ENCODE measurements at regions of chr1 and their contacts with region 1.

Region 1: DNA sequence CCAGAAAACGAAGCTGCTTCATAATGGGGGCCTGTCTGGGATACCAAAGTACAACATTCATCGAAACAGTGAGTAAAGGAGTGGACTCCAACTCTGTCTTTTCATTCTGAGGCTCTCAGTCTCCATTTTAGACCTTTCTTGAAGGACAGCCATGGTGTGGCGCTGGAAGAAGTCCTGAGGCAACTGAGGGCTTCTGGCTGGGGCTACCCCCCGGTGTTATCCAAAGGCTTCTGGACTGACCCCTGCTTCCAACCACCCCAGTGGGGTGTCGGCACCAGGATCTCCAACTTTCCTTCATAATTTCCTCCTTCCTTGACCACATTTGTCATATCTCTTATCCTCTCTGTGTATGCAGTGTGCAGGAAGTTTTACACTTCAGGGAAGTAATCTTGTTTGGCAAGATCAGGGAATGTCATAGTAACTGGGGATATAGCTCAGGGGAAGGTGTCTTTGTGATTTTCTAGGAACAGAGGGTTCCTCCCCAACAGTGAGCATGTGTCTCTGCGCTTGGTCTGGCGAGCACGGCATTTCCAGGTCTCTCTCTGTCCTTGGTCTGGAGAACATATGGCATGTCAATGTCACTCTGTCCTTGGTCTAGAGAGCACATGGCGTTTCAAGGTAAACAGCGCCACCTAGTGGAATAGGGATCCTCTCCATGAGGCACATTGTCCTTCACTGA is 19.4 kb upstream of the BSDC1 start:
- DNase-seq: peak; percentile 46
- H3K4me3 ChIP-seq: no peak overlapping the region
- H3K27ac ChIP-seq: no peak overlapping the region
- H3K4me1 ChIP-seq: no peaks in the 10 kb centered on the region
- H3K27me3 ChIP-seq: no peaks in the 10 kb centered on the region
- CTCF ChIP-seq: peak; percentile 67 to 78

Region 2: DNA sequence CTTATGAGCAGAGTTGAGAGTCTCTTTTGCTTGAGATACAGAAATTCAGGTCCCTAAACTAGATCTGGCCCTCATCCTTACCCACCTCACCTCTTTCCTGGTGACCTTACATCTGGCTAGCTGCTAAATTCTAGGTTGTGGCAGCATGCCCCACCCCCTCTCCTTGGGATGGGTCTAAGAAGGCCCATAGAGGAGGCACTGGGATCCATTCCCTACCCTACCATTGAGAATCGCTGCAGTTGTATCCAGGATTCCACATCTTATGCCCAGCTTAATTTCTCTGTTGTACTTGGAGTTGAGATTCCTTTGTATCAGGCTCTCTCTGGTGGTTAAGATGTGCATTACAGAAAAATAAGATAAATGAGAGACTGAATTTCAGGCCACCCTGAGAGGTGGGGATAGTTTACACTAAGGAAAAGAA is 350.4 kb before region 1 on chr1:
- CTCF ChIA-PET with region 1: no interaction called
- dilution Hi-C with region 1: no loop called
- in situ Hi-C with region 1: no loop called
- intact Hi-C with region 1: loop called (anchors 5 kb)
- DNase-seq: peak; percentile 38
- H3K4me3 ChIP-seq: no peak overlapping the region
- H3K27ac ChIP-seq: no peak overlapping the region
- H3K4me1 ChIP-seq: peaks cover 23% of the 10 kb centered on the region
- H3K27me3 ChIP-seq: no peaks in the 10 kb centered on the region
- CTCF ChIP-seq: peak; percentile 54 to 59

Region 3: GRCh38 chr1:32215629-32216480 is 197.8 kb before region 1 on chr1:
- CTCF ChIA-PET with region 1: no interaction called
- dilution Hi-C with region 1: no loop called
- in situ Hi-C with region 1: no loop called
- intact Hi-C with region 1: loop called (anchors 1 kb)
- DNase-seq: peak; percentile 39
- H3K4me3 ChIP-seq: no peak overlapping the region
- H3K27ac ChIP-seq: no peak overlapping the region
- H3K4me1 ChIP-seq: peaks cover 12% of the 10 kb centered on the region
- H3K27me3 ChIP-seq: no peaks in the 10 kb centered on the region
- CTCF ChIP-seq: peak; percentile 84 to 91

Region 4: GRCh38 chr1:32321712-32322291 is 91.8 kb before region 1 on chr1:
- CTCF ChIA-PET with region 1: no interaction called
- dilution Hi-C with region 1: loop called (anchors 5 kb)
- in situ Hi-C with region 1: no loop called
- intact Hi-C with region 1: no loop called
- DNase-seq: no peak
- H3K4me3 ChIP-seq: no peak overlapping the region
- H3K27ac ChIP-seq: no peak overlapping the region
- H3K4me1 ChIP-seq: no peaks in the 10 kb centered on the region
- H3K27me3 ChIP-seq: no peaks in the 10 kb centered on the region
- CTCF ChIP-seq: no peak

Region 5: GRCh38 chr1:32386676-32387392 is 26.8 kb before region 1 on chr1:
- CTCF ChIA-PET with region 1: no interaction called
- dilution Hi-C with region 1: no loop called
- in situ Hi-C with region 1: no loop called
- intact Hi-C with region 1: no loop called
- DNase-seq: no peak
- H3K4me3 ChIP-seq: no peak overlapping the region
- H3K27ac ChIP-seq: no peak overlapping the region
- H3K4me1 ChIP-seq: no peaks in the 10 kb centered on the region
- H3K27me3 ChIP-seq: no peaks in the 10 kb centered on the region
- CTCF ChIP-seq: no peak

Region 6: GRCh38 chr1:32400876-32401631 is 12.6 kb before region 1 on chr1:
- CTCF ChIA-PET with region 1: interaction called, 12 read pairs
- dilution Hi-C with region 1: no loop called
- in situ Hi-C with region 1: no loop called
- intact Hi-C with region 1: loop called (anchors 1 kb)
- DNase-seq: peak; percentile 63
- H3K4me3 ChIP-seq: no peak overlapping the region
- H3K27ac ChIP-seq: no peak overlapping the region
- H3K4me1 ChIP-seq: no peaks in the 10 kb centered on the region
- H3K27me3 ChIP-seq: no peaks in the 10 kb centered on the region
- CTCF ChIP-seq: peak; percentile 94 to 95

Region 7: DNA sequence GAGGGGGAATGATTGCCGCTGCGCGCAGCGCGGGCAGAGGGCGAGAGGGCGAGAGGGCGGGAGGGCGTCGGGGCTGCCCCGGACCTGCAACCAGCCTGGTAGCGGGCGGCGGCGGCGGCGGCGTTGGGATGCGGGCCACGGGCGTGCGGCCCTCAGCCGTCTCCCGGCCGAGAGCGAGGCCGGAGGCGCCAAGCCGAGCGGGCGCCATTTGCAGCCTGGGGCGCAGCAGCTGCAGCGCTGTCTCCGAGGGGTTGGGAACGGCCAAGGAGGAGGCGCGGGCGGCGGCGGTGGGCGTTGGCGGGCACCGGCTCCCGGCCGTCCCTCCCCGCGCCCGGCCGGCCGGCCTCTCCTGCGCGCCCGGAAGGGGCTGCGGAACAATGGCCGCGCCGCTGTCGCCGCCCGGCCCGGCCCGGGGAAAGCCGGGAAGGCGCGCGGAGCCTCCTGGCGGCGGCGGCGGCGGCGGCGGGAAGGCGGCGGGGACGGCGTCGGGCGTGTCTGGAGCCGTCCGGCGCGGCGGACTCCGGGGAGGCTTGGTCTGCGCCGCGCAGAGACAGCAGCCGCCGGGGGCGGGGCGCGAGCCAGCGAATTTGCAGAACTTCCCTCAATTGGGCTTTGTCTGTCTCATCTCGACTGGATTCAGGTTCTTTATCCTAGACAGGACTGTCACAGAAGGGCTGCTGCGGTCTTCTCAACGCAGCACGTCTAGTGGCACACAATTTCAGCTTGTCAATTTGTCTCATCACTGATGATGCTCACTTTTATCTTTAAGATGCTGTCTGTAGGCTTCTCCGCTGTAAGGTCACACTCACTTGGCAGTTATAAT is 87.0 kb after region 1 on chr1:
- CTCF ChIA-PET with region 1: no interaction called
- dilution Hi-C with region 1: loop called (anchors 5 kb)
- in situ Hi-C with region 1: no loop called
- intact Hi-C with region 1: loop called (anchors 10 kb)
- DNase-seq: peak; percentile 63
- H3K4me3 ChIP-seq: peak overlapping the region; percentile 55 to 78 (median 77)
- H3K27ac ChIP-seq: no peak overlapping the region
- H3K4me1 ChIP-seq: peaks cover 3% of the 10 kb centered on the region
- H3K27me3 ChIP-seq: no peaks in the 10 kb centered on the region
- CTCF ChIP-seq: peak in 1 of 2 donors; percentile 18

Region 8: DNA sequence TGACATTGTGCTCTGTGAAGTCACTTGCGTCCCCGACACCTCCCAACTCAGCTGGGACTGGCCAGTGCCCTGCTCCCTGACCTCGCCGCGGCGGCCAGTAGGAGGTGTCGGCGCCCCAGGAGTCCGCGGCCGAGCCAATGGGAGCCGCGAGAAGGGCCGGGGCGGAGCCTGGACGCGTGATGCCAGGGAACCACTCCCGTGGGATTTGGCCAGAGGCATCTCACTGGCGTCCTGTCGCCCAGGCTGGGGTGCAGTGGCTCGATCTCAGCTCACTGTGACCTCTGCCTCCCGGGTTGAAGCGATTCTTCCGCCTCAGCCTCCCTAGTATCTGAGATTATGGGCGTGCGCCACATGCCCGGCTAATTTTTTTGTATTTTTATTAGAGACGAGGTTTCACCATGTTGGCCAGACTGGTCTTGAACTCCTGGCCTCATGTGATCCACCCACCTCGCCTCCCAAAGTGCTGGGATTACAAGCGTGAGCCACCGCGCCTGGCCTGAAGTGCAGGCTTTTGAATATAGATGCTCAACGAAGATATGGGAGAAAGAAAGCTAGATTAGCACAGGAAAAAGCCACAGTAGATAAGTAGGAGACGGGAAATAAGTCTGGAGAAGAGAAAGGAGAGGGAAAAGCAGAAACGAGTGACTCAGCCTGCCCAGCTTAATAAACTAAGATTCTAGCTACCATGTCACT is 198.7 kb after region 1 on chr1:
- CTCF ChIA-PET with region 1: interaction called, 22 read pairs
- dilution Hi-C with region 1: no loop called
- in situ Hi-C with region 1: no loop called
- intact Hi-C with region 1: no loop called
- DNase-seq: peak; percentile 73
- H3K4me3 ChIP-seq: peak overlapping the region; percentile 12 to 57 (median 56)
- H3K27ac ChIP-seq: no peak overlapping the region
- H3K4me1 ChIP-seq: peaks cover 3% of the 10 kb centered on the region
- H3K27me3 ChIP-seq: no peaks in the 10 kb centered on the region
- CTCF ChIP-seq: peak in 1 of 2 donors; percentile 42

Measured in mammary epithelial cell (primary cell).